IMR-90 (cell line): ENCODE measurements at regions of chr7 and their contacts with region 1.

Region 1: DNA sequence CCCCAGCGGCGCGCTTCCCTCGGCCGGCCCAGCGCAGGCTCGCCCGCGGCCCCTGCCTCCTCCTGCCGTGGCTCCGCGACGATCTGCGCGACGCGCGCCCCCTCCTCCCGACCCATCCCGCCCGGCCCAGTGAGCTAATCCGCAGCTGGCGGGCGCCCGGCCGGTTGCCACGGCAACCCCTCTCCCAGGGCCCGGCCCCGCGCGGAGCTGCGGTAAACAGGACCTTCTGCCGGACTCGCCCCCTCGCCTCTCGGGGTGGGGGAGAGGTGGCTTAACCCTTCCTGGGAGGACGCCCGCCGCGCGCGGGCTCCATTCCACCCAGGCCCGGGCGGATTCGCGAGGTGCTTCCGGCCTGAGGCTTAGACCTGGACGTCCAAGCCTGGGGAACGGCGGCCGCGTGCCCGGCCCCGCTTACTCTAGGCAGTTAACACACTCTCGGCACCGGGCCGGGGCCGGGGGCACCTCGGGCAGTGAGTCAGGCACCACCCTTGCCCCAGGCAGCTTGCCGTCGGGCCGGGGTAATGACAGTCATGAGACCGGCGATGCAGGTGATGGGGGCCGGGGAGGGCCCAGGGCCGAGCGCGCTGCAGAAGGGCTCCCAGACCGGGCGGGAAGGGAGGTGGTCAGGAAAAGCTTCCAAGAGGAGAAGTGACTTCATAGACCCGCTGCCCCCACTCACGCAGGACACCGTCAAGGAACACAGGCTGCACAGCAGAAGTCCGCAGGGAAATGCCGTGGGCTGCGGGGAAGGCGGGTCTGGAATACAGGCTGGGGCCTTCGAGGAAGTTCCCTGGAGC is at the start of gene DENND2A:
- DNase-seq: peak; percentile 76
- ATAC-seq: peak; percentile 65
- H3K4me3 ChIP-seq: peak within 1 kb of the TSS; percentile 85
- H3K27ac ChIP-seq: peak within 1 kb of the TSS; percentile 92
- H3K4me1 ChIP-seq: peaks cover 16% of the 10 kb centered on the region
- H3K27me3 ChIP-seq: no peaks in the 10 kb centered on the region
- CTCF ChIP-seq: no peak
- POLR2A ChIP-seq: peak; percentile 61; the same call in 1 of the 2 replicates
- RAD21 ChIP-seq: 0 out of 2 replicates have a peak, but pooled peaks have one; percentile 5
- total RNA-seq, gene DENND2A: 7.5 and 7.8 TPM in 2 replicates

Region 2: DNA sequence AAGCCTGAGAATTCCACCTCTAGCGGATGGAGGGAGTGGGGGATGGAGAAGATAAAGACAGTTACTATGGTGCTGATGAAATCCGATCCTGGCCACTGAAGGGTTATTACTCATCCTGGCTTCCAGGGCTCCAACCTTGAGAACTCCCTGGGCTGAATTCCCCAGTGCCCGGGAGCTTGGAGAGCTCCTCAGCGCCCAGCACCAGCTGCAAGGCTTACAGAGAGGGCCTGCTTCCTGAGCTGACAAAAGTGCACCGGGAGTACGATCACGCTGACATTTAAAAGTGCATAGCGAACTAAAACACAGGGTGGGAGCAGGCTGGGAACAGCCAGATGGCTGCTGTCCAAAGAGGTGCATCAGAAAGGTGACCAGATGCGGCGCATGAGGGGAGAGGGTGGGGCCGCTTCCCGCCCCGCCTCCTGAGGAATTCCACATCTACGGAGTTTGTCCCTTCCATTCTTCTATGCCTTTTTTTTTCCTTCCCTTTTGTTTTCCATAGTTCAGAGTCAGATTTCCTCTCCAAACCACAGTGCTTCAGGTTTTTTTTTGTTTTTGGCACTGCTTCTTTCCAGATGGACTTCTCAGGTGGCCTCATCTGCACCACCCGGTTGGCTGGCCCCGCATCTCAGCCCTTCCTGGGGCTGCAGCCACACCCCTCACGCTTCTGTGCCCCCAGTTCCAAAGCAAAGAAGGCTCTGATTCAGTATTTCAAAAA is 99.3 kb before region 1 on chr7:
- CTCF ChIA-PET with region 1: no interaction called
- POLR2A ChIA-PET with region 1: no interaction called
- dilution Hi-C with region 1: no loop called
- in situ Hi-C with region 1: no loop called
- intact Hi-C with region 1: loop called (anchors 2 kb)
- DNase-seq: peak; percentile 96
- ATAC-seq: peak; percentile 89
- H3K4me3 ChIP-seq: no peak overlapping the region
- H3K27ac ChIP-seq: peak overlapping the region; percentile 72
- H3K4me1 ChIP-seq: peaks cover 15% of the 10 kb centered on the region
- H3K27me3 ChIP-seq: no peaks in the 10 kb centered on the region
- CTCF ChIP-seq: no peak
- POLR2A ChIP-seq: no peak
- RAD21 ChIP-seq: peak; percentile 20; the same call in 1 of the 2 replicates

Region 3: GRCh38 chr7:140564643-140565042 is 76.3 kb before region 1 on chr7:
- CTCF ChIA-PET with region 1: no interaction called
- POLR2A ChIA-PET with region 1: no interaction called
- dilution Hi-C with region 1: no loop called
- in situ Hi-C with region 1: no loop called
- intact Hi-C with region 1: loop called (anchors 1 kb)
- DNase-seq: no peak
- ATAC-seq: no peak
- H3K4me3 ChIP-seq: no peak overlapping the region
- H3K27ac ChIP-seq: no peak overlapping the region
- H3K4me1 ChIP-seq: peaks cover 14% of the 10 kb centered on the region
- H3K27me3 ChIP-seq: no peaks in the 10 kb centered on the region
- CTCF ChIP-seq: no peak
- POLR2A ChIP-seq: no peak
- RAD21 ChIP-seq: no peak

Region 4: GRCh38 chr7:140607441-140607989 is 33.4 kb before region 1 on chr7:
- CTCF ChIA-PET with region 1: interaction called, 3 read pairs
- POLR2A ChIA-PET with region 1: interaction called, 11 read pairs
- dilution Hi-C with region 1: no loop called
- in situ Hi-C with region 1: no loop called
- intact Hi-C with region 1: loop called (anchors 1 kb)
- DNase-seq: peak; percentile 91
- ATAC-seq: peak; percentile 30
- H3K4me3 ChIP-seq: no peak overlapping the region
- H3K27ac ChIP-seq: peak overlapping the region; percentile 80
- H3K4me1 ChIP-seq: peaks cover 34% of the 10 kb centered on the region
- H3K27me3 ChIP-seq: no peaks in the 10 kb centered on the region
- CTCF ChIP-seq: no peak
- POLR2A ChIP-seq: no peak
- RAD21 ChIP-seq: 0 out of 2 replicates have a peak, but pooled peaks have one; percentile 14

Region 5: DNA sequence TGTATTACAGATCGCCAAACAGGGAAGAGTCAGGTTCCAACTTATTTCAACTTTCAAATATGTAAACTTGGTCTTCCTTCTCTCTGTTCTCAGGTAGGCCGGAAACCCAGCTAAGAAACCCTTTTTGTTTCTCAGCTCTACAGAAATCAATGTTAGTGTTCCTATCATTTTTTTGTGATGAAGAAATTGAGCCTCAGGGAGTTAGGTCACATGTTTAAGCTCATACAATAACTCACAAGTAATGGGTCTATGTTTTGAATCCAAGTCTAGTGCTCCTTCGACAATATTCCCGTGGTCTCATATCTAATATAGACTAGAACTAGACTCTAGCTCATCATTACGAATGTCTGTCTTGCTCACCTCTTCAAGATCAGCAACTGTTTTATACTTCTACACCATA is 22.6 kb before region 1 on chr7:
- CTCF ChIA-PET with region 1: no interaction called
- POLR2A ChIA-PET with region 1: interaction called, 13 read pairs
- dilution Hi-C with region 1: no loop called
- in situ Hi-C with region 1: no loop called
- intact Hi-C with region 1: no loop called
- DNase-seq: no peak
- ATAC-seq: no peak
- H3K4me3 ChIP-seq: no peak overlapping the region
- H3K27ac ChIP-seq: no peak overlapping the region
- H3K4me1 ChIP-seq: peaks cover 9% of the 10 kb centered on the region; the same call in 1 of the 2 replicates
- H3K27me3 ChIP-seq: no peaks in the 10 kb centered on the region
- CTCF ChIP-seq: no peak
- POLR2A ChIP-seq: no peak
- RAD21 ChIP-seq: no peak

Region 6: GRCh38 chr7:140625908-140626868 is 14.7 kb before region 1 on chr7:
- CTCF ChIA-PET with region 1: no interaction called
- POLR2A ChIA-PET with region 1: interaction called, 15 read pairs
- dilution Hi-C with region 1: no loop called
- in situ Hi-C with region 1: no loop called
- intact Hi-C with region 1: loop called (anchors 1 kb)
- DNase-seq: peak; percentile 100
- ATAC-seq: peak; percentile 90
- H3K4me3 ChIP-seq: no peak overlapping the region
- H3K27ac ChIP-seq: peak overlapping the region; percentile 80
- H3K4me1 ChIP-seq: peaks cover 19% of the 10 kb centered on the region
- H3K27me3 ChIP-seq: no peaks in the 10 kb centered on the region
- CTCF ChIP-seq: no peak
- POLR2A ChIP-seq: no peak
- RAD21 ChIP-seq: no peak